ENCODE measurements at regions of chr18 and their contacts with region 1.

Region 1: DNA sequence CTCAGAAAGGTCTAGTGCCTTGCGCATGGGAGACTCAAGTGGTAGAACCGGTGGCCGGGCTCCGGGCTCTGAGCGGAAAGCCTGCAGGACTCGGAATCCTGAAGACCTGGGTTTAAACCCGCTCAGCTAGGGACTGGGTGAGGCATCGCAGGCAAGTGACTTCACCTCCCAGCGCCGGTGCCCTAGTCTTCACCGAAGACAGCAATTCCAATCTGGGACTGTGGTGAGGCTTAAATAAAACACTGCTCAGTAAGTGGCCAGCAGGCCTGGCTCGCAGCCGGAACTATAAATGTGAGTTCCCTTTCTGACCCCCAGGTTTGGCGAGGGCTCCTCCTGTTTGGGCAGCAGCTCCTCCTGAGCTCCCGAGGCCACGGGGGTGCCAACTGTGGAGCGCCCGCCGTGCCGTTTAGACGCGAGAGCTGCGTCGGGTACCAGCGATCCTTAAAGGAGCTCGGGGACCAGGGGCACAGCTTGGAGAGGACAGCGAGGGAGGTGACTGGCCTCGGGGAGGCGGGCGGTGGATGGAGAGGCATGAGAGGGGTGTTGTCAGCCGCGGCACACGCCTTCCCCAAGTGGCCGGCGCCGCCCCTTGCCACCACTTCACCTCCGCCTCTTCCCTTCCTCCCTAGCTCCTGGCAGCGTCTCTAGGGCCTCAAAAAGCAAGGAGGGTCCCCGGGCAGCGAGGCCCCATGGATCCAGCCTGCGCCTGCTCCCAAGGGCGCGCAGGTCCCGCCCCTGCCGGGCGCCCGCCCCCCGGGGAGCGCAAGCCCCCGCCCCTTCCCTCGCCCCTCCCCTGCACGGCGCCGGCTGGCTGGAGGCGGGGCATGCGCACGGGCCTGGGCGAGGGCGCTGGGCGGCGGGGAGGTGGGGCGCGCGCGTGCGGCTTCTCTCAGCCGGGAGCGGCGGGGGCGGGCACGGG is 736 bp upstream of the MTCL1 start:
- DNase-seq: peak; percentile 69 to 96
- H3K4me3 ChIP-seq: peak overlapping the region; percentile 76
- H3K27ac ChIP-seq: peak overlapping the region; percentile 51
- H3K4me1 ChIP-seq: peaks cover 21% of the 10 kb centered on the region
- H3K27me3 ChIP-seq: no peaks in the 10 kb centered on the region
- CTCF ChIP-seq: no peak

Region 2: GRCh38 chr18:8608795-8609658 is 95.6 kb before region 1 on chr18 and contains the start of gene RAB12:
- CTCF ChIA-PET with region 1: no interaction called
- POLR2A ChIA-PET with region 1: no interaction called
- intact Hi-C with region 1: loop called (anchors 5 kb)
- DNase-seq: peak; percentile 50 to 86
- H3K4me3 ChIP-seq: peak within 1 kb of the TSS; percentile 98
- H3K27ac ChIP-seq: peak within 1 kb of the TSS; percentile 79; the same call in 1 of the 2 replicates
- H3K4me1 ChIP-seq: peaks cover 41% of the 10 kb centered on the region
- H3K27me3 ChIP-seq: no peaks in the 10 kb centered on the region
- CTCF ChIP-seq: peak; percentile 58
- total RNA-seq, gene RAB12: 60.1 and 79.4 TPM in 2 replicates

Region 3: DNA sequence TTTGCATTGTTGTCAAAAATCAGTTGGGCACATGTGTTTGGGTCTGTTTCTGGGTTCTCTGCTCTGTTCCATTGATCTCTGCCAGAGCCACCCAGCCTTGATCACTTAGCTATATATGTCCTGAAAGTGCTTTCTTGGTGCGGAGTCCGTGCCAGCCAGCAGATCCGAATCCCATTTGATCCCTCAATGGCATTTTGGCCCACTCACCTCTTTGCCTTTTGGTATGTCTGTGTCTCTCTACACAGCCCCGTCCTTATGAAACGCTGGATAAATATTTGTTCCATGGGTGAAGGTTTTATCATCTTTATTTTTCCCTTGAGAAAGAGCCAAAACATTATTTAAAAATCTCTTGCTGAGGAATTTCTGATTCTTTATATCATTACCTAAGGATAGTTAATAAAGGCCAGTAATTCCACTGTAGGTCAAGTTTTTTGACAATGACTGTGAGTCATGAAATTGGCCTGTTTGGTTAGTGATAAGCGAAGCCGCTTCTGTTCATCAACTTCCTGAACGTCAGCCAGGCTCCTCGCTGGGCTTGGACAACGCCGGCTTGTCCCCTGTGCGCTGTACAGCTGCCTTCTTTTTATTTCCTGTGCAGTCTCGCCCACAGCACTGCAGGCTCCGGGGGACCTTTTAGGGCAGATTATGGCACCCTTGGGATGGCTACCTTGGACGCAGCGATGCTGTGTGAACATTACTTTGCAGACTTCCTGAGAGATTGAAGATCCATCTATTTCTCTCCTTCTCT is 25.6 kb after region 1 on chr18:
- CTCF ChIA-PET with region 1: interaction called, 8 read pairs
- POLR2A ChIA-PET with region 1: interaction called, 5 read pairs
- intact Hi-C with region 1: loop called (anchors 2 kb)
- DNase-seq: peak; percentile 79 to 90
- H3K4me3 ChIP-seq: peak overlapping the region; percentile 2; the same call in 1 of the 2 replicates
- H3K27ac ChIP-seq: peak overlapping the region; percentile 30
- H3K4me1 ChIP-seq: peaks cover 24% of the 10 kb centered on the region
- H3K27me3 ChIP-seq: no peaks in the 10 kb centered on the region
- CTCF ChIP-seq: no peak

Region 4: DNA sequence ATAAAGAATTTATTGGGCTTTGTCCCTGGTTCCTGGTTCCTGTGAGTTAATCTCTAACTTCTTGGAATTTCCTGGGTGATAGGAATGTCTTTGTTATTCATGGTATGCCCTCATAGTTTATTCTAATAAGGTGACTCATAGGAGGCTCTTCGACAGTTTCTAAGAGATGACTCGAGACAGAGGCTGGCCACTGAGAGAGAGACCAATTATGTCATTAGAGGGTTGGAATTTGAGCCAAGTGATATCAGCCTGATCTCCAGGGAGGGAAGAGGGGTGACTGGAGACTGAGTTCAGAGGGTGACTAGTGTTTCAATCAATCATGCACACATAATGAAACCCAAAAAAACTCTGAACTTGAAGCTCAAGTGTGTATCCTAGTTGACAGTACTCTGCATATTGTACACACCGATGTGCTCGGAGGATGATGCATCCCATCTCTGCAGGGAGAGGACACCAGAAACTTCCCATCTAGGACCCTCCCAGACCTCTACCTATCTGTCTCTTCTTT is 186.4 kb after region 1 on chr18:
- CTCF ChIA-PET with region 1: no interaction called
- POLR2A ChIA-PET with region 1: no interaction called
- intact Hi-C with region 1: loop called (anchors 2 kb)
- DNase-seq: peak; percentile 79 to 99
- H3K4me3 ChIP-seq: no peak overlapping the region
- H3K27ac ChIP-seq: peak overlapping the region; percentile 51
- H3K4me1 ChIP-seq: peaks cover 17% of the 10 kb centered on the region
- H3K27me3 ChIP-seq: no peaks in the 10 kb centered on the region
- CTCF ChIP-seq: no peak

Region 5: DNA sequence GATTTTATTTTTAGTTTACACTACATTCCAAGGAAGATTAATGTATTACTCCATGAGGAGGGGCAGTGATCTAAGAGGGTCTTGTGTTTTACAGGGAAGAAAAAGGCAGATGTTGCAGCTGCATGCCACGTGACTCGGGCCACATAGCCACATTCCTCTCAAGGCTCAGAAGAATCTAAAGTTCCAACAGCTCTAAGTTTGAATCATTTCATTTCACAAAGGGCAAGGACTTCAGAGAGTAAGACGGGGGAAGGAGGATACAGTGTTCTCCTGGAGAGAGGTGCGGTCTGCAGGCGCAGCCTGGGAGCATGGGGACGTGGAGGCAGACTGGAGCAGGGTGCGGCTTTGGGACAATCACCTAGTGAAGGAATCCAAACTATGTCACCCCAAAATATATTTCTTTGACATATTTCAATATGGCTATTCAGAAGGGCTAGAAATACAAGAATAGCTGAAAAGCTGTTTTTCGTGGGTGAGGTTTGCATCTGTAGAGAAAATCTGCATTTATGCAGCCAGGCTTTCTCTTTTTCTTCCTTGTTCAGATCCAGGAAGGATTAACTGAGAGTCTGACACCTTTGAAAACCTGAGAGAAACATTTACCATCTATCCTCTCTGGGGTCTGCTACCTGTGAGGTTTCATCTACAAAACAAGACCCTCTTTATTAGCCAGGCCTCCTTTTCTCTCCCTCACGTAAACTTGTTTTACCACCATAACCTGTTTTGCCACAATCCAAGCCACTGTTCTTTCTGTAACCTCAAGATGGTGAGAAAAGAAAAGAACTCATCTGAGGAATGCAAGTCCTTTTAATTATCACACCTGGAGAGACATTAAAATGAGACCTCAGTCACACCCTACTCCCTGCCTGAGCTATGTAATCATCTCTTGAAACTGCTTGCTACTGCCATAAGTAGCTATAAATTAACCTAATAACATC is 232.8 kb after region 1 on chr18:
- CTCF ChIA-PET with region 1: no interaction called
- POLR2A ChIA-PET with region 1: no interaction called
- intact Hi-C with region 1: loop called (anchors 5 kb)
- DNase-seq: peak; percentile 59 to 94
- H3K4me3 ChIP-seq: no peak overlapping the region; the same call in 1 of the 2 replicates
- H3K27ac ChIP-seq: peak overlapping the region; percentile 57
- H3K4me1 ChIP-seq: peaks cover 36% of the 10 kb centered on the region
- H3K27me3 ChIP-seq: no peaks in the 10 kb centered on the region
- CTCF ChIP-seq: no peak

Measured in PC-9 (cell line).